Heart left ventricle (tissue), 16 donors: ENCODE measurements at regions of chr10 and their contacts with region 1.

Region 1: GRCh38 chr10:116385994-116386809 is 41.4 kb upstream of the PNLIPRP3 start:
- DNase-seq: no peak
- ATAC-seq: no peak
- H3K4me3 ChIP-seq: no peak overlapping the region
- H3K27ac ChIP-seq: no peak overlapping the region
- H3K4me1 ChIP-seq: no peaks in the 10 kb centered on the region
- H3K27me3 ChIP-seq: no peaks in the 10 kb centered on the region
- CTCF ChIP-seq: peak; percentile 26 to 71 (median 53)
- POLR2A ChIP-seq: no peak

Region 2: DNA sequence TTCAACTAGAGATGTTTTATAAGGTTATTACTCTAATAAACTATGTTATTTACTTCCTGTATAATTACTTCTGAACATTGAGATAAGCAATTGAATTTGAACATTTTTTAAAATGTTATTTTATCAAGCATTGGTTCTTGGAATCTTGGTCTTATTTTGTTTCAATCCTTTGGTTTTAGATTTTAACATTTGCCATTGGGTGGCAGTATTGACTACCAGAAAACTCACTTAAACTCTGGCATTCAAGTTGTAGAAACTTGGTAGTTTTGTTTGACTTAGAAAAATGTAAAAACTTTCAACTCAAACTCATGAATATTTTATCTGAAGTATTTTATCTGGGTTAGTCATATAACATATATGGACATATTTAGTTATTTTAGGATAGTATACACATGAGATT is 1244.9 kb before region 1 on chr10:
- intact Hi-C with region 1: loop called in 3 of 10 experiments (anchors 10 kb)
- DNase-seq: no peak
- ATAC-seq: no peak
- H3K4me3 ChIP-seq: no peak overlapping the region
- H3K27ac ChIP-seq: no peak overlapping the region
- H3K4me1 ChIP-seq: no peaks in the 10 kb centered on the region
- H3K27me3 ChIP-seq: no peaks in the 10 kb centered on the region
- CTCF ChIP-seq: peak in 7 of 12 donors; percentile 10 to 44 (median 26)
- POLR2A ChIP-seq: no peak

Region 3: GRCh38 chr10:115355162-115355760 is 1030.9 kb before region 1 on chr10:
- intact Hi-C with region 1: loop called in 9 of 10 experiments (anchors 5 to 10 kb)
- DNase-seq: no peak
- ATAC-seq: peak in 1 of 4 donors; percentile 60
- H3K4me3 ChIP-seq: no peak overlapping the region
- H3K27ac ChIP-seq: no peak overlapping the region
- H3K4me1 ChIP-seq: no peaks in the 10 kb centered on the region
- H3K27me3 ChIP-seq: no peaks in the 10 kb centered on the region
- CTCF ChIP-seq: peak; percentile 16 to 60 (median 44)
- POLR2A ChIP-seq: no peak

Region 4: DNA sequence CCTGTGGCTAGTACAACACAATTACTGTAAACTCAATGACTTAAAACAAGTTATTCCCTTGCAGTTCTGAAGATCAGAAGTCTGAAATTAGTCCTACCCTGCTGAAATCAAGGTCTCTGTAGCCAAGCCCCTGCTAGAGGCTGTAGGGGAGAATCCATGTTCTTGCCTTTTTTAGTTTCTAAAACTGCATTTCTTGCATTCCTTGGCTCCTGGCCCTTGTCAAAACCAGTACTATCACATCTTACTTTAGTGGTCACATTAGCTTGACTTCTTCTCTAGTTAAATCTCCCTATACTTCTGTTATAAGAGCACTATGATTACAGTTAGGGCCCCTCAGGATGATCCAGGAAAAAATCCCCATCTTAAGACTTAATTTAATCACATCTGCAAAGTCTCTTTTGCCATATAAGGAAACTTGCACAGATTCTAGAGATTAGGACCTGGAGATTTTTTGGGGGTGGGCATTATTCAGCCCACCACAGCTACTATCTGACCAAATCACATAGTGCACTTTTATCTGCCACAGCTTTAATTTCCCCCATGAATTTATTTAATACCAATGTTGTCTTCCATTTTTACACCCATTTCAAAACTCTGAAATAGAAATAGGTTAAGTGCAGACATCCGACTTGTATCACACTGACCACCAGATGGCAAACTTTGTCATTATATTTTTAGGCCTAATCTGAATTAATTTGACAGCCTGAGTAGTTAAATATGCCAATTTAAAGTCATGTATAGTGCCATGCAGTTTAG is 680.0 kb before region 1 on chr10:
- intact Hi-C with region 1: loop called in 8 of 10 experiments (anchors 5 to 10 kb)
- DNase-seq: no peak
- ATAC-seq: no peak
- H3K4me3 ChIP-seq: no peak overlapping the region
- H3K27ac ChIP-seq: no peak overlapping the region
- H3K4me1 ChIP-seq: no peaks in the 10 kb centered on the region
- H3K27me3 ChIP-seq: no peaks in the 10 kb centered on the region
- CTCF ChIP-seq: peak; percentile 14 to 53 (median 34)
- POLR2A ChIP-seq: no peak

Region 5: DNA sequence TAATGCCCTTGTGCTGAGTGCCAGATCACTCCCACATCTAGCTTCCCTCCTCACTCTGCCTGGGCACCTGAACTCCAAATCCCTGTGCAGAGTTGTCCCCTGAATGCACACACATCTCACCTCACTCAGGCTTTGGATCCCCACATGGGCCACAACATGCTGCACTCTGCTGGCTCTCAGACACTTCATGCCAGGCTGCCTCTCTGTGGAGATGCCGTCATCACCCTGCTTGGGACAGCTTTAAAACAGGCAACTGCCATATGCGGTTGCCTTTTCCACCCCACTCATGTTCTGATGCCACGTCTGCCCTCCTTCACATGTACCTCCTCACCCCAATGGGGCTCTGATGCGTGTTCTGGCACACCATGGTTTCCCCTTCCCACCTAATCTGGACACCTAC is 590.2 kb before region 1 on chr10:
- intact Hi-C with region 1: loop called in 3 of 10 experiments (anchors 5 to 10 kb)
- DNase-seq: no peak
- ATAC-seq: no peak
- H3K4me3 ChIP-seq: no peak overlapping the region
- H3K27ac ChIP-seq: no peak overlapping the region
- H3K4me1 ChIP-seq: no peaks in the 10 kb centered on the region
- H3K27me3 ChIP-seq: peaks cover 0 to 2% (median 0%) of the 10 kb centered on the region in 9 donors
- CTCF ChIP-seq: no peak
- POLR2A ChIP-seq: no peak

Region 6: DNA sequence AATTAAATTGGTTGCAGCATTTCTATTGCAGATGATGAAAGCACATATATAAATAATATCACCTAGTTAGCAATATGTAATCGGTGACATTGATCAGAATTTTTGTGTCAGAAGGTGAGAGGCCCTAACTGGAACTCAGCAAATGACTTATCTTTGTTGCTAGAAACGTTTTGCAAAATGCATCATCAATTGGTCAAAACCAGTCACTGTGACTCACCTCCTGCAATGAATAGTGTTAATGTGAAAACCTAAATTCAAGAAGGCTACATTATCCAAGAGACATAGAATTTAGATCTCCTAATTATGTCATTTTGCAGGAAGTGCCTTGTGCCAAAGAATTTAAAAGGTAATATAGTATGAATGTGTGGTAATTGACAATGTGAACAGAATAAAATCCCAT is 31.6 kb after region 1 on chr10:
- intact Hi-C with region 1: no loop called
- DNase-seq: no peak
- ATAC-seq: no peak
- H3K4me3 ChIP-seq: no peak overlapping the region
- H3K27ac ChIP-seq: no peak overlapping the region
- H3K4me1 ChIP-seq: no peaks in the 10 kb centered on the region
- H3K27me3 ChIP-seq: peaks cover 0 to 8% (median 0%) of the 10 kb centered on the region in 9 donors
- CTCF ChIP-seq: no peak
- POLR2A ChIP-seq: no peak

Region 7: DNA sequence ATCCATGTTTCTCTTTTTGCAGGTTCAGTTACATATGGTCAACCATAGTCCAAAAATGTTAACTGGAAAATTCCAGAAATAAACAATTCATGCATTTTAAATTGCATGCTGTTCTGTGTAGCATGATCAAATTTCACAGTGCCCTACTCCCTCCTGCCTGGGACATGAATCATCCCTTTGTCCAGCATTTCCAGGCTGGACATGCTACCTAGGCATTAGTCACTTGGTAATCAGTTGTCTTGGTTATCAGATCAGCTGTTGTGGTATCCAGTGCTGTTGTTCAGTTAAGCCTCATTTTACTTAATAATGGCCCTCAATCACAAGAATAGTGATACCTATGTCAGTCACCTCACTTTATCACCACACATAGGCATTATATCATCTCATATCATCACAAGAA is 152.3 kb after region 1 on chr10:
- intact Hi-C with region 1: no loop called
- DNase-seq: no peak
- ATAC-seq: no peak
- H3K4me3 ChIP-seq: no peak overlapping the region
- H3K27ac ChIP-seq: no peak overlapping the region
- H3K4me1 ChIP-seq: no peaks in the 10 kb centered on the region
- H3K27me3 ChIP-seq: peaks cover 0 to 7% (median 0%) of the 10 kb centered on the region in 9 donors
- CTCF ChIP-seq: no peak
- POLR2A ChIP-seq: no peak

Region 8: DNA sequence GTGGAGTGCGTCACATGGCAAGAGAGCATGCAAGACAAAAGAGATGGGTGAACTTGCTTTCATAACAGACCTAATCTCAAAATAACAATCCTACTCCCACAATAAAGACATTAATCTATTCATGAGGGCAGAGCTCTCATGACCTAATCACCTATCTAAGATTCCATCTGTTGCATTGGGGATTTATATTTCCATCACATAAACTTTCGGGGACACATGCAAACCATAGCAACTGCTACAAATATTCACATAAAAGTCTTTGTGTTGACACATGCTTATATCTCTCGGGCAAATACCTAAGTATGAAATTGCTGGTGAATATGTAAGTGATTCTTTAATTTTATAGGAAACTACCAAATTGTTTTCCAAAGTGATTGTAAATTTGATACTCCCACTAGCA is 188.6 kb after region 1 on chr10:
- intact Hi-C with region 1: no loop called
- DNase-seq: no peak
- ATAC-seq: no peak
- H3K4me3 ChIP-seq: no peak overlapping the region
- H3K27ac ChIP-seq: no peak overlapping the region
- H3K4me1 ChIP-seq: no peaks in the 10 kb centered on the region
- H3K27me3 ChIP-seq: no peaks in the 10 kb centered on the region
- CTCF ChIP-seq: no peak
- POLR2A ChIP-seq: no peak

Region 9: GRCh38 chr10:116646502-116646901 is 260.3 kb after region 1 on chr10:
- intact Hi-C with region 1: no loop called
- DNase-seq: no peak
- ATAC-seq: no peak
- H3K4me3 ChIP-seq: no peak overlapping the region
- H3K27ac ChIP-seq: no peak overlapping the region
- H3K4me1 ChIP-seq: no peaks in the 10 kb centered on the region
- H3K27me3 ChIP-seq: peaks cover 0 to 9% (median 0%) of the 10 kb centered on the region in 9 donors
- CTCF ChIP-seq: no peak
- POLR2A ChIP-seq: no peak